B cell (primary cell): ENCODE measurements at regions of chr2 and their contacts with region 1.

Region 1: DNA sequence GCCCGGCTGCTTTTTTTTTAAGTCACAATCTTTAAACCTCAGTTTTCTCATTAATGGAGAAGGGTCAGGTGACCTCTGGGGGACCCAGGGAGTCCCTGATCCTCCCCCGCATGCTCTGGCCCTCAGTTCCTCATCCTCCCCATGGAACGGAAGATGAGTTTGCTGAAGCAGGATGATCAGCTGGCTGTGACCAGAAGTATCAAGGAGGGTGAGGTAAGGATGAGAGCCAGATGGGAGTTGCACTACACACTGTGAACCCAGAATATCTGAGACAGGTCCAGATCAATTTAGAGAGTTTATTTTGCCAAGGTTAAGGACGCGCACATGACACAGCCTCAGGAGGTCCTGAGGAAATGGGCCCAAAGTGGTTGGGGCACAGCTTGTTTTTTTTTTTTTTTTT is 3.8 kb downstream of the CATIP start:
- DNase-seq: no peak
- ATAC-seq: no peak
- H3K4me3 ChIP-seq: no peak overlapping the region
- H3K4me3 Mint-ChIP-seq: no peak overlapping the region
- H3K27ac ChIP-seq: no peak overlapping the region
- H3K27ac Mint-ChIP-seq: no peak overlapping the region
- H3K4me1 ChIP-seq: peaks cover 0 to 7% of the 10 kb centered on the region in 2 donors
- H3K4me1 Mint-ChIP-seq: peaks cover 4% of the 10 kb centered on the region
- H3K27me3 ChIP-seq: no peaks in the 10 kb centered on the region
- H3K27me3 Mint-ChIP-seq: no peaks in the 10 kb centered on the region
- CTCF ChIP-seq: no peak

Region 2: DNA sequence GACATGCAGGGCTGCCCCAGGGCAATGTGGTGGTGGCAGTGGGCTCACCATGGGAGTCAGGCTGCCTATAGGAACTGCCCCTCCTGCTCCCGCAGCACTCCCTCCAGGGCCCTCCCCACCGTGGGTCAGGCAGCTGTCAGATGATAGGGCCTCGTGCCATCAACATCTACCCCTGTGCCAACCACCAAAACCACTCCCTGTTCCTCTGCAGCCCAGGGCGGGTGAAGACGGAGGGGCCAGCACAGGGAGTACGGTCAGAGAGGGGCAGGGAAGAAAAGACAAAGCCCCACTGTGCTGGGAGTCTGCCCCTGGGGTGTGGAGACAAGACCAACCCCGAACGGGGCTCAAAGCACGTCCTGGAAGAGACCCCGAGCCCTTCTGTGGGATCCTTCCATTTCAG is 455.1 kb before region 1 on chr2:
- CTCF ChIA-PET with region 1: no interaction called
- POLR2A ChIA-PET with region 1: no interaction called
- intact Hi-C with region 1: no loop called
- DNase-seq: no peak
- ATAC-seq: no peak
- H3K4me3 ChIP-seq: no peak overlapping the region
- H3K4me3 Mint-ChIP-seq: no peak overlapping the region
- H3K27ac ChIP-seq: no peak overlapping the region
- H3K27ac Mint-ChIP-seq: no peak overlapping the region
- H3K4me1 ChIP-seq: peaks cover 0 to 3% of the 10 kb centered on the region in 2 donors
- H3K4me1 Mint-ChIP-seq: peaks cover 5% of the 10 kb centered on the region
- H3K27me3 ChIP-seq: peaks cover 0 to 29% (median 1%) of the 10 kb centered on the region in 4 experiments
- H3K27me3 Mint-ChIP-seq: peaks cover 43% of the 10 kb centered on the region
- CTCF ChIP-seq: no peak

Region 3: GRCh38 chr2:217988014-217988839 is 372.2 kb before region 1 on chr2:
- CTCF ChIA-PET with region 1: no interaction called
- POLR2A ChIA-PET with region 1: no interaction called
- intact Hi-C with region 1: no loop called
- DNase-seq: peak; percentile 73
- ATAC-seq: peak; percentile 67
- H3K4me3 ChIP-seq: no peak overlapping the region
- H3K4me3 Mint-ChIP-seq: no peak overlapping the region
- H3K27ac ChIP-seq: no peak overlapping the region
- H3K27ac Mint-ChIP-seq: no peak overlapping the region
- H3K4me1 ChIP-seq: no peaks in the 10 kb centered on the region
- H3K4me1 Mint-ChIP-seq: no peaks in the 10 kb centered on the region
- H3K27me3 ChIP-seq: no peaks in the 10 kb centered on the region
- H3K27me3 Mint-ChIP-seq: peaks cover 18% of the 10 kb centered on the region
- CTCF ChIP-seq: peak; percentile 85

Region 4: GRCh38 chr2:218186355-218186766 is 174.1 kb before region 1 on chr2:
- CTCF ChIA-PET with region 1: interaction called, 9 read pairs
- POLR2A ChIA-PET with region 1: no interaction called
- intact Hi-C with region 1: loop called (anchors 1 kb)
- DNase-seq: peak; percentile 82
- ATAC-seq: peak; percentile 91
- H3K4me3 ChIP-seq: no peak overlapping the region
- H3K4me3 Mint-ChIP-seq: no peak overlapping the region
- H3K27ac ChIP-seq: no peak overlapping the region
- H3K27ac Mint-ChIP-seq: peak overlapping the region; percentile 26
- H3K4me1 ChIP-seq: peaks cover 2 to 7% of the 10 kb centered on the region in 2 donors
- H3K4me1 Mint-ChIP-seq: peaks cover 6% of the 10 kb centered on the region
- H3K27me3 ChIP-seq: peaks cover 0 to 8% (median 2%) of the 10 kb centered on the region in 4 experiments
- H3K27me3 Mint-ChIP-seq: peaks cover 7% of the 10 kb centered on the region
- CTCF ChIP-seq: peak; percentile 88

Region 5: DNA sequence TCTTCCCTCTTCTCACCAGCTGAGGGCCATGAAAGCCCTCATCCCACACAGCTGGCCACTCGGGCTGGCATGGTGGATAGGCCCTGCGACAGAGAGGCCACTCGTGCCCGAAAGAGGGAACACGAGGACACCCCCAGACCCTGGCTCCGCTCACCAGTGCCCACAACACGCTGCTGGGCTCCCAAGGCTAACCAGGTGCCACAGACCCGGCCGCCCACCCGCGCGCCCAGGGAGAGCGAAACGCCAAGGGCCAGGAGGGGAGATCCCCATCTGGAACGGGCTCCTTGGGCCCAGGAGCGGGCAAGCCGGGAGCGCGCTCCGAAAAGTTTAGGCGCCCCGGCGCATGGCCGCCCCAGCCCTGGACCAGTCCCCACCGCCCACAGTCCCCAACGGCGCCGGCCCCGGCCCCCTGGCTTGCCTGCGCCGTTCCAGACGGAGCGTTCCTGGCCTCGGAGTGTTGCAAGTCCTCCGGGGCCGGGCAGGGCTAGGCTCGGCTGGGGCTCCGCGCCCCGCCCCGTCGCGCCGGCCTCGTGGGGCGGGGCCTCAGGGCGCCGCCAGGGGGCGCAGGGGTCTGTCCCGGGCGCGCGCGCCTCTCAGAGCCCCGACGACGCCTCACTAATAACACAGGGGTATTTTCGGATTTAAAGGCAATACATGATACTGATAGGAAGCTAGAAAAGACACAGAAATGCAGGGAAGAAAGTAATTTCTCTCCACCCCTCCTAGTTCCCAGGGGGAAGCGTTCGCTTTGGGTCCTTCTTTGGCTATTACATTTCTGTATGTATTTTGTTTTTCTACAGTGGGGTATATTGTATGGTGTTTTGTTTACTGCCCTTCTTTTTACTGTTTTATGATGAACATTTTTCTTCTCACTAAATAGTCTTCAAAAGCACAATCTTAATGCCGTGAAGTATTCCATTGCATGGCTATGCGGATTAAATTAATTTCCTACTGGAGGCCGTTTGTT is 68.1 kb before region 1 on chr2 and contains the start of gene TMBIM1:
- CTCF ChIA-PET with region 1: interaction called, 30 read pairs
- POLR2A ChIA-PET with region 1: interaction called, 9 read pairs
- intact Hi-C with region 1: loop called (anchors 2 kb)
- DNase-seq: peak; percentile 90
- ATAC-seq: peak; percentile 72
- H3K4me3 ChIP-seq: peak within 1 kb of the TSS; percentile 50 to 95 (median 87)
- H3K4me3 Mint-ChIP-seq: peak within 1 kb of the TSS; percentile 89
- H3K27ac ChIP-seq: peak within 1 kb of the TSS; percentile 92 to 98
- H3K27ac Mint-ChIP-seq: peak within 1 kb of the TSS; percentile 93
- H3K4me1 ChIP-seq: peaks cover 57 to 71% of the 10 kb centered on the region in 2 donors
- H3K4me1 Mint-ChIP-seq: peaks cover 60% of the 10 kb centered on the region
- H3K27me3 ChIP-seq: no peaks in the 10 kb centered on the region
- H3K27me3 Mint-ChIP-seq: no peaks in the 10 kb centered on the region
- CTCF ChIP-seq: peak; percentile 90
- total RNA-seq, gene TMBIM1: 128 and 137 TPM in 2 replicates

Region 6: GRCh38 chr2:218307415-218308090 is 52.9 kb before region 1 on chr2:
- CTCF ChIA-PET with region 1: interaction called, 84 read pairs
- POLR2A ChIA-PET with region 1: no interaction called
- intact Hi-C with region 1: no loop called
- DNase-seq: no peak
- ATAC-seq: no peak
- H3K4me3 ChIP-seq: no peak overlapping the region
- H3K4me3 Mint-ChIP-seq: no peak overlapping the region
- H3K27ac ChIP-seq: no peak overlapping the region
- H3K27ac Mint-ChIP-seq: no peak overlapping the region
- H3K4me1 ChIP-seq: no peaks in the 10 kb centered on the region
- H3K4me1 Mint-ChIP-seq: no peaks in the 10 kb centered on the region
- H3K27me3 ChIP-seq: no peaks in the 10 kb centered on the region
- H3K27me3 Mint-ChIP-seq: no peaks in the 10 kb centered on the region
- CTCF ChIP-seq: no peak

Region 7: GRCh38 chr2:218329027-218329825 is 31.2 kb before region 1 on chr2:
- CTCF ChIA-PET with region 1: interaction called, 7 read pairs
- POLR2A ChIA-PET with region 1: interaction called, 10 read pairs
- intact Hi-C with region 1: no loop called
- DNase-seq: no peak
- ATAC-seq: peak; percentile 53
- H3K4me3 ChIP-seq: no peak overlapping the region
- H3K4me3 Mint-ChIP-seq: peak overlapping the region; percentile 68
- H3K27ac ChIP-seq: peak overlapping the region; percentile 4 to 41
- H3K27ac Mint-ChIP-seq: peak overlapping the region; percentile 84
- H3K4me1 ChIP-seq: peaks cover 20 to 31% of the 10 kb centered on the region in 2 donors
- H3K4me1 Mint-ChIP-seq: peaks cover 46% of the 10 kb centered on the region
- H3K27me3 ChIP-seq: peaks cover 0 to 2% (median under 1%) of the 10 kb centered on the region in 4 experiments
- H3K27me3 Mint-ChIP-seq: peaks cover 3% of the 10 kb centered on the region
- CTCF ChIP-seq: no peak